Activated CD4-positive, alpha-beta T cell treated with anti-CD3 and anti-CD28 coated beads for 36 hours (primary cell): ENCODE measurements at regions of chr19 and their contacts with region 1.

Region 1: DNA sequence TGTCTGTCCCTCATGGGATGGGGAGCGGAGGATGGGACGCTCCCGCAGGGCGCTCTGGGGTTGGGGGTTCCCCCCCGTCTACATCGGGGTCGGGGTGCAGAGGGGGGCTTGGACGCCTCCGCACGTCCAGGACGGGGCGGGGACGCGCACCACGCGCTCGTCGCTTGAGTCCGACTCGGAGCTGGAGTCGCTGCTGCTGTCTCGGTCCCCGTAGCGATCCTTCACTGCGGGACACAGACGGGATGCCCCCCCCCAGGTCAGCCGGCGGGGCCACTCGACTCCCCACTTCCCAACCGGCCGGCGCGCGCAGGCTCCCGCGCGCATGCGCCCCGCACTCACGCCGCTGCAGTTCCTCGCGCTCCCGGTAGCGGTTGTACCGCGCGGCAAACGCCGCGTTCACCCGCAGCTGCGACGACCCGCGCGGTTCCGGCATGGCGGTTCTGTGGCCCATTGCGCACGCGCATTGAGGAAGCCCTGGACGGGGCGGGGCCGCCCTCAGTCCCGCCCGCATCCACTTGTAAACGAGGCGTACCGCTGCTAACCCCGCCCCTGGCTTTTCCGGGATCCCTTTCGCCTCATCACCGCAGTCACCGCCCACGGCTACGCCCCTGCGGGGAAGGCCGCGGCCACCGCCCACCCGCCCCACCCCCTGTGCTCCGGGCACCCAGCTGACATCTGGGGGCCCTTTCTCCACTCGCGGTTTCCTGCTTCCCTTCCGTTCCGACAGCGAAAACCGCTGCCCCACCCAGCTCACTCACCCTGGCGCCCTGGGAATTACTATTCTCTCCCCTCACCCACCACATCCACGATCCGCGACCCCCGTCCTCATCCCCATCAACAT is at the start of gene KRI1:
- DNase-seq: peak; percentile 100
- ATAC-seq: peak; percentile 39
- H3K4me3 Mint-ChIP-seq: peak within 1 kb of the TSS; percentile 98
- H3K27ac Mint-ChIP-seq: peak within 1 kb of the TSS; percentile 94
- H3K4me1 Mint-ChIP-seq: peaks cover 34% of the 10 kb centered on the region
- H3K27me3 Mint-ChIP-seq: no peaks in the 10 kb centered on the region
- total RNA-seq, gene KRI1: 62.5 to 67.1 TPM

Region 2: GRCh38 chr19:10251792-10252694 is 313.7 kb before region 1 on chr19 and contains the start of gene MRPL4:
- CTCF ChIA-PET with region 1: no interaction called
- POLR2A ChIA-PET with region 1: no interaction called
- intact Hi-C with region 1: loop called in 1 of 2 experiments (anchors 5 kb)
- DNase-seq: peak; percentile 97
- ATAC-seq: peak; percentile 99
- H3K4me3 Mint-ChIP-seq: peak within 1 kb of the TSS; percentile 97
- H3K27ac Mint-ChIP-seq: peak within 1 kb of the TSS; percentile 97
- H3K4me1 Mint-ChIP-seq: peaks cover 18% of the 10 kb centered on the region
- H3K27me3 Mint-ChIP-seq: no peaks in the 10 kb centered on the region
- total RNA-seq, gene MRPL4: 130 to 140 TPM

Region 3: GRCh38 chr19:10361569-10362011 is 204.2 kb before region 1 on chr19:
- CTCF ChIA-PET with region 1: no interaction called
- POLR2A ChIA-PET with region 1: no interaction called
- intact Hi-C with region 1: no loop called
- DNase-seq: no peak
- ATAC-seq: no peak
- H3K4me3 Mint-ChIP-seq: no peak overlapping the region
- H3K27ac Mint-ChIP-seq: no peak overlapping the region
- H3K4me1 Mint-ChIP-seq: no peaks in the 10 kb centered on the region
- H3K27me3 Mint-ChIP-seq: no peaks in the 10 kb centered on the region

Region 4: DNA sequence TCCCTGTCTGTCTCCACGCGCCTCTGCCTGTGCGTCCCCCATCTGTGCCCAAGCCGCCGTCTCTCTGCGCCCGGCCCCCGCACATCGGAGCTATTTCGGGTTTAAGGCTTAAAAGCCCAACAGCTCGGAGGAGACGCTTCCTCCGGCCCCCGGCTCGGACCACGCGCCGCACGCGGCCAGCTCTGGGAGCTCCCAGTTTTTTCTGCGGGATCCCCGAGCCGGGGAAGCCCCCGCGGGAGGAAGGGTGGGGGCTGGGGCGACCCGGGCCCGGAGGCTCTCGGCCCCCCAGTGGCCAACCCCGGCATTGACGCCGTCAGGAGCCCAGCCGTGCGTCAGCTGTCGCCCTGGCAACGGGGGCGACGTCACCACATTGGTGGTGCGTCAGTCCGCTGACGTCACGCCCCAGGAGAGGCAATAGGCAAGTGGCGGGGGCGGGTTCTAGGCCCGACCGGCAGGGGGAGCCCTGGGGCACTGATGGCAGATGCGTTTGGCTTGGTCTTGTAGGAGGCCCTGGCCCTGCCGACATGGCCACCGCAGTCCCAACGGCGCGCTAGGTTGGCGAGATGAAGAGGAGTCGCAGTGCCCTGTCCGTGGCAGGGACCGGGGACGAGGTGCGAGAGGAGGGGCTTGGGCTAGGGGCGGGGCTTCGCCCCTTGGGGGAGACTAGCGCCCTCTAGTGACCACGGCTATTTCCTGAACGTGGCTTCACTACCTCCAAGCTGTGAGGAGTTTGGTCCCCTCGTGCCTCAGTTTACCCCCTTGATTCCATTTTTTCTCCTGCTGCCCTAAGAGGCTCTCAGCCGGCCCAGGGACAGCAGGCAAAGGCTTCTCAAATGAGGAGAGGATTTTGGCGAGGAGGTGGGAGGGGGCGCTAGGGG is 149.2 kb before region 1 on chr19:
- CTCF ChIA-PET with region 1: interaction called, 3 read pairs
- POLR2A ChIA-PET with region 1: no interaction called
- intact Hi-C with region 1: loop called (anchors 2 to 5 kb)
- DNase-seq: peak; percentile 98
- ATAC-seq: peak; percentile 61
- H3K4me3 Mint-ChIP-seq: peak overlapping the region; percentile 59
- H3K27ac Mint-ChIP-seq: peak overlapping the region; percentile 45
- H3K4me1 Mint-ChIP-seq: peaks cover 51% of the 10 kb centered on the region
- H3K27me3 Mint-ChIP-seq: peaks cover 36% of the 10 kb centered on the region

Region 5: DNA sequence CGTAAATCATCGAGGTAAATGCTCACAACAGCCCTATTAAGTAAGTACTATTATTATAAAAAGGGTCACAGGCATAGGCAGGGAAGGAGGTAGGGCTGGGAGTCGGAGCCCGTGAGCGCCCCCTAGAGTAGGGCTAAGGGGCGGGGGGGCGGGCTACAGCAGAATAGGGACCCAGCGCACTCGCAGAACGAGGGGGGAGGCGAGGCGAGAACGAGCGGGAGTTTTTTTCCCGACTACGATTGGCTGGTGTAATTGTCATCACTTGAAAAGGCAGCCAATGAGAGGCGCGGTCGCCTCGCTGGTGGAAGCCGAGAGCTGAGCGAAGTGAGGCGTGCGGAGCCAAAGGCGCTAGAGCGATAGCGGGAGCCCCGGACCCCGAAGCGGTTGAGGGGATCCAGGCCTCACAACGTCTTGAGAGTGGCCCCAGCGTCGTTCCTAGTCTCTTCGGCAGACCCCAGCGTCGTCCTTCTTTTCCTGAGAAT is 86.8 kb before region 1 on chr19:
- CTCF ChIA-PET with region 1: no interaction called
- POLR2A ChIA-PET with region 1: no interaction called
- intact Hi-C with region 1: no loop called
- DNase-seq: peak; percentile 94
- ATAC-seq: peak; percentile 99
- H3K4me3 Mint-ChIP-seq: peak overlapping the region; percentile 38
- H3K27ac Mint-ChIP-seq: peak overlapping the region; percentile 47
- H3K4me1 Mint-ChIP-seq: peaks cover 13% of the 10 kb centered on the region
- H3K27me3 Mint-ChIP-seq: no peaks in the 10 kb centered on the region

Region 6: DNA sequence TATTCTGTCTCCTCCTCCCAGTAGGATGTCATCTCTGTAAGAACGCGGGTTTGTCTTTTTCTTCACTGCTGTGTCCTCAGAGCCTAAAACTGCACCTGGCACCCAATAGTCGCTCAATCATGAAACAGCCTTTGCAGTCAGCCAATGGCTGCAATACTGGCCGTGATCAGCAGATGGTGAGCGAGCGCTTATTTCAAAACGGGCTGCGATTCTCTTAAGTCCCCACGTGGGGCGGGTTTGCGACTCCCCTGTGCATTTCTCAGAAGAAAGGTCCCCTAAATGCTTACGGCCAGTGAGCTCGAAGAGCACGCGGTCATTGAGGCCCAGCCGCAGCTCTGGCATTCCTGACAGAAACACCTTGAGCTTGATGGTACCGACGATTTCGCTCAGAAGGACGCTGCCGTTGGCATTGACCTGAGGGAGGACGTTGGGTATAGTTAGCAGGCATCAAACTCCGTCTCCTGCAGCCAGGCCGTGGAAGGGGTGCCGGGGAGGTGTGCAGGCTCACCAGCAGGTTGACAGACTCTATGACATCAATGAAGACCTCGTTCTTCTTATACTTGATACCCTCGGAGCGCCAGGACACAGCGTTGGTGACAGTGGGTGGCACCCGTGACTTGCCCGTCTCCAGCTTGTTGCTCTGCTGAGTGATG is 15.3 kb after region 1 on chr19:
- CTCF ChIA-PET with region 1: interaction called, 23 read pairs
- POLR2A ChIA-PET with region 1: no interaction called
- intact Hi-C with region 1: no loop called
- DNase-seq: peak; percentile 95
- ATAC-seq: peak; percentile 98
- H3K4me3 Mint-ChIP-seq: no peak overlapping the region
- H3K27ac Mint-ChIP-seq: no peak overlapping the region
- H3K4me1 Mint-ChIP-seq: peaks cover 17% of the 10 kb centered on the region
- H3K27me3 Mint-ChIP-seq: no peaks in the 10 kb centered on the region

Region 7: GRCh38 chr19:10717356-10718204 is 151.8 kb after region 1 on chr19 and contains the start of gene DNM2:
- CTCF ChIA-PET with region 1: interaction called, 3 read pairs
- POLR2A ChIA-PET with region 1: interaction called, 3 read pairs
- intact Hi-C with region 1: loop called in 1 of 2 experiments (anchors 1 kb)
- DNase-seq: peak; percentile 98
- ATAC-seq: peak; percentile 92
- H3K4me3 Mint-ChIP-seq: peak within 1 kb of the TSS; percentile 97
- H3K27ac Mint-ChIP-seq: peak within 1 kb of the TSS; percentile 89
- H3K4me1 Mint-ChIP-seq: peaks cover 45% of the 10 kb centered on the region
- H3K27me3 Mint-ChIP-seq: no peaks in the 10 kb centered on the region
- total RNA-seq, gene DNM2: 167 to 185 TPM

Region 8: GRCh38 chr19:10960314-10961072 is 394.7 kb after region 1 on chr19 and contains the start of gene SMARCA4:
- CTCF ChIA-PET with region 1: no interaction called
- POLR2A ChIA-PET with region 1: interaction called, 3 read pairs
- intact Hi-C with region 1: loop called (anchors 2 kb)
- DNase-seq: peak; percentile 99
- ATAC-seq: peak; percentile 76
- H3K4me3 Mint-ChIP-seq: peak within 1 kb of the TSS; percentile 89
- H3K27ac Mint-ChIP-seq: peak within 1 kb of the TSS; percentile 90
- H3K4me1 Mint-ChIP-seq: peaks cover 38% of the 10 kb centered on the region
- H3K27me3 Mint-ChIP-seq: no peaks in the 10 kb centered on the region
- total RNA-seq, gene SMARCA4: 102 to 116 TPM

Region 9: DNA sequence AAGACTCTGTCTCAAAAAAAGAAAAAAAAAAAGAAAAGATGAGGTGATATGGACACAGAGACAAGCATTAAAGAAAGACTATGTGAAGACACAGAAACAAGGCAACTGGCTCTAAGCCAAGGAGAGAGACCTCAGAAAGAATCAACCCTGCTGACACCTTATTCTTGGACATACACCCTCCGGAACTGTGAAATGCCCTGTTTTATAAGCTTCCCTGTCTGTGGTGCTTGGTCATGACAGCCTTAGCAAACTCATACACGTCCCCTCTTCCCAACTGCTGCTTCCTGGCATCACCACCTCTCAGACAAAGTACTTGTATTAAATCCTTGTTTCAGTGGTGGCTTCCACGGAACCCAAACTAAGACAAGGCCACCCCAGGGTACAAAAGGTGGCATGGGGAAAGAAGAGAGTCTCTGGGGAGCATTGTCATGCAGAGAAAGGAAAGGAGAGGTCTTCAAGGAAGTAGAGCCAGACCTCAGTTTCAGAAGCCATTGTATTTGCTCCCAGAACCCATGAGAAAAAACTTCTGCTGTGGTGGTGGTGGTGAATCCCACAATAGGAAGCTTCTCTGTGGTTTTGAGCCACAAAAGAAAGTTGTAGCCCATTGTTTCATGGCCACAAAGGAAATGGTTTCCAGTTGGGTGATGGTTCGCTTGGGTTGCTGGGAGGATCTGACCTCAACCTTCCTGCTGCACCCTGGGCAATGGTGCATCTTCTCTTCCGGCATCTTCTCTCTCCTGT is 713.9 kb after region 1 on chr19:
- CTCF ChIA-PET with region 1: no interaction called
- POLR2A ChIA-PET with region 1: no interaction called
- intact Hi-C with region 1: no loop called
- DNase-seq: peak; percentile 9
- ATAC-seq: peak; percentile 81
- H3K4me3 Mint-ChIP-seq: peak overlapping the region; percentile 2
- H3K27ac Mint-ChIP-seq: no peak overlapping the region
- H3K4me1 Mint-ChIP-seq: peaks cover 12% of the 10 kb centered on the region
- H3K27me3 Mint-ChIP-seq: peaks cover 32% of the 10 kb centered on the region